BJ (cell line): ENCODE measurements at regions of chr20 and their contacts with region 1.

Region 1: DNA sequence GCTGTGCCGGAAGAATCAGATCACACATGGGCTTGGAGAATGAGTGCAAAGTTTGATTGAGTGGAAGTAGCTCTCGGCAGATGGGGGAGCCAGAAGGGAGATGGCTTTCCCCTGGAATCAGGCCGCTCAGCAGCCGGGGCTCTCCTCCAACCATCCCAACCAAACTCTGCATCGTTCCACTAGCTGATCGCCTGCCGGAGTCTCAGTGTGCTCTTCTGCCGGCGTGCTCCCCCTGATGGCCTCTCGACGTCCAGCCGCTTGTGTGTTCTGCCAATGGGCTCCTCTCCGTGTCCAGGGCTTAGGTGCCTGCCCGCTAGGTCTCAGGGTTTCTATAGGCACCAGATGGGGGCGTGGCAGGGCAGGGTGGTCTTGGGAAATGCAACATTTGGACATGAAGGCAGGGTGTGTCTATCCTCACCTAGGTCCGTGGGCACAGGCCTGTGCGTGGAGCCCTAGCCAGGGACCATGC is 4.9 kb upstream of the BIRC7 start:
- DNase-seq: no peak
- H3K4me3 ChIP-seq: no peak overlapping the region
- H3K27me3 ChIP-seq: no peaks in the 10 kb centered on the region
- CTCF ChIP-seq: peak; percentile 87

Region 2: GRCh38 chr20:63124092-63124781 is 106.6 kb before region 1 on chr20:
- CTCF ChIA-PET with region 1: no interaction called
- POLR2A ChIA-PET with region 1: no interaction called
- DNase-seq: no peak
- H3K4me3 ChIP-seq: no peak overlapping the region
- H3K27me3 ChIP-seq: peaks cover 6% of the 10 kb centered on the region
- CTCF ChIP-seq: no peak

Region 3: GRCh38 chr20:63216041-63216848 is 14.6 kb before region 1 on chr20 and contains the start of gene YTHDF1:
- CTCF ChIA-PET with region 1: interaction called, 22 read pairs
- POLR2A ChIA-PET with region 1: no interaction called
- DNase-seq: peak; percentile 57
- H3K4me3 ChIP-seq: peak within 1 kb of the TSS; percentile 63
- H3K27me3 ChIP-seq: peaks cover 7% of the 10 kb centered on the region
- CTCF ChIP-seq: no peak
- polyA plus RNA-seq, gene YTHDF1: 17.5 and 19.1 TPM in 2 replicates